ENCODE measurements at regions of chr17 and their contacts with region 1.

Region 1: DNA sequence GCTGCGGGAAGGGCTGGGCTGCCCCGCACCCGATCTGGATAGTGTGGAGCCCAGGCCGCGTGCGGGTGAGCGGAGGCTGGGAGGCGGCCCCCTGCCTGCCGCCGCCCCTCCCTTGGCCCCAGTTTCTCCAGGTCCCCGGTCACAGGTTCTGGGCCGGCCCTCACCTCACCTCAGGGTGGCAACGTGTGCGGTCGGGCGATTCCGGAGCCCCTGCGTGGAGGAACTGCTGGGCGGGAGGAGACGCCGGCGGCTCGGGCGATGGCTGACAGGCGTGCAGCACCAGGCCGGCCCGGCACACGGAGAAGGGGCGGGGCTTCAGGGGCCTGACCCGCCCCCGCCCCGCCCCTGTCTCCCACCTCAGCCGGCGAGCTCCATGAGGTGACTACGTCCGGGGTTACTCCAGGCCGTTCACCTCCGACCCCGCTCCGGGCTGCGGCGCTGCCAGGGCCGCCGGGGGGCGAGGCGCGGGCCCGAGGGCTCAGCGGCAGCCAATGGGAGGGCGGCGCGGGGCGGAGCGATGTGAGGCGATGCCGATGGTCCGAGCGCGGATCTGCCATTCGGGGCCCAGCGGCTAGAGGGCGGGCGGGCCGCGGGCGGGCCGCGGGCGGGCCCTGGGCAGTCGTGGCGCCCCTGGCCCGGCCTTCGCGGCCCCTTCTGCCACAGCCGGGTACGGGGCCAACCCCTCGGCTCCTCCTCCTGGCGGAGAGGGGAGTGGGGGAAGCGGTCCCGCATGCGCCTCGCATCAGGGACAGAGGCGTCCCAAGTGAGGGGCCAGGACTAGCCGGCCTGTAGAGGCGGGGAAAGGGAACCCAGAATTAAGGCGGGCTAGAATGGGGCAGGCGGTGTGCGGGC is 16.7 kb upstream of the C17orf78 start:
- DNase-seq: peak; percentile 96
- H3K4me3 ChIP-seq: peak overlapping the region; percentile 78
- H3K27ac ChIP-seq: peak overlapping the region; percentile 42
- H3K4me1 ChIP-seq: peaks cover 28% of the 10 kb centered on the region
- CTCF ChIP-seq: peak; percentile 42; the same call in 1 of the 2 replicates

Region 2: GRCh38 chr17:36550491-36551417 is 808.3 kb before region 1 on chr17:
- CTCF ChIA-PET with region 1: no interaction called
- POLR2A ChIA-PET with region 1: no interaction called
- intact Hi-C with region 1: loop called (anchors 5 kb)
- DNase-seq: peak; percentile 57
- H3K4me3 ChIP-seq: peak overlapping the region; percentile 56
- H3K27ac ChIP-seq: peak overlapping the region; percentile 67
- H3K4me1 ChIP-seq: peaks cover 85% of the 10 kb centered on the region
- CTCF ChIP-seq: no peak

Region 3: DNA sequence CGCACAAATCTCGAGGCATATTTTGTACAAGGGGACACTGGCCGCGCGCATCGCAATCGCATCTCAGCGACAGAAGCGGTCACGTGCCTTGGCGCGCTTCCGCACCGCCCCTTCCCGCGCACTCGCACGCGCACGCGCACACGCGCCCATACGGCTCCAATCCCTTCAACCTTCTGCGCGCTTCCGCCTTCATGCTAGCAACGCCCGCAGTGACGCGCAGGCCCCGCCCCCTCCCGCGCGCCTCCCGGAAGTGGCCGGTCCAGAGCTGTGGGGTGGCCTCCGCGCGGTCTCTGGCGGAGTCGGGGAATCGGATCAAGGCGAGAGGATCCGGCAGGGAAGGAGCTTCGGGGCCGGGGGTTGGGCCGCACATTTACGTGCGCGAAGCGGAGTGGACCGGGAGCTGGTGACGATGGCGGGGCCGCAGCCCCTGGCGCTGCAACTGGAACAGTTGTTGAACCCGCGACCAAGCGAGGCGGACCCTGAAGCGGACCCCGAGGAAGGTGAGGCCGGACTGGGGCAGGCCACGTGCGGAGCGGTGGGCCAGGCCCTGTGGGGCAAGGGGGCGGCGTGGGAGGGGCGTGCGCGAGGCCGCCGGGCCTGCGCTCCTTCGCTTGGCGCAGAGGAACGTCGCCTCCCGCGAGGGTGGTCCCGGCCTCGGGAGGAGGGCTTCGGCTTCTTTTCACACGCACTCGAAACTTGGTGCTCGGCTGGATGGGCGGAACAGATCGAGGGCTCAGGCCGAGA is 410.2 kb before region 1 on chr17 and contains the start of gene AATF:
- CTCF ChIA-PET with region 1: no interaction called
- POLR2A ChIA-PET with region 1: no interaction called
- intact Hi-C with region 1: loop called (anchors 5 kb)
- DNase-seq: peak; percentile 97
- H3K4me3 ChIP-seq: peak within 1 kb of the TSS; percentile 91
- H3K27ac ChIP-seq: peak within 1 kb of the TSS; percentile 59
- H3K4me1 ChIP-seq: peaks cover 24% of the 10 kb centered on the region
- CTCF ChIP-seq: no peak
- total RNA-seq, gene AATF: 71.7 and 83.5 TPM in 2 replicates

Region 4: DNA sequence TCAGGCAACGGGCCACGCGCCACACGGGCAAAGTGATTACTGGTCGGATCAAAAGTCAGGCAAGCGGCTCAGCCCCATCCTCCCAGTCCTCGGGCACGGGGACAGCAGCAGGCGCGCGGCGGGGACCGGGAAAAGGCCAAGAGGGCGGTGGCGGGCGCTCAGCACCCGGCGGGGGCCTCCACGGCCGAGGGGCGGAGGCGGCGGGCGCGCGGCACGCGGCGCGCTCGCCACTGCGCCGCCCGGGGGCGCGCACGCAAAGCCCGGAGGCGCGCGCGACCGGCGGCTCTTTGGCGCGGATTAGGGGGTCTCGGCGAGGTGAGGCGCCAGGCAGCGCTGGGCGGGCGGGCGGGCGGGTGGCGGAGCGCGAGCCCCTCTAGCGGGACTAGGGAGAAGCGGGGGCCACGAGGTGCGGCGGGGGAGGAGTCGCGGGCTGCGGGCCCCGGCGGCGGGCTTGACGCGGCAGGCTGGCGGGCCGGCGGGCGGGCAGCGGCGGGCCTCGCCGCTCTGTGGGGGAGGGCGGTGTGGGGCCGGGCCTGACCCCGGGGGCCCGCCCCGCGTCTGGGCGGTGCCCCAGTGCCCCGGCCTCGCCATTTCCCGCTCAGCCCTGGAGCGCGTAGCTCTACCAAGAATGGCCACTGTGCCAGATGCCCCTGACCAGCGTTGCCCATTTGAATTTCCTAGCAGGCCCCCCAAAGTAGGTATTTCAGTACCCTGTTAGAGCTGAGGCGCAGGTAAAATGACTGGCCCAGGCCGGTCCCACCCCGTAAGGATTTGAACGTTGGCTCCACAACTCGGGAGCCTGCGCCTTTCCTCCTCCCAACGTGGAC is 47.8 kb after region 1 on chr17 and contains the starts of genes ACACA and TADA2A:
- CTCF ChIA-PET with region 1: no interaction called
- POLR2A ChIA-PET with region 1: interaction called, 3 read pairs
- intact Hi-C with region 1: loop called (anchors 2 kb)
- DNase-seq: peak; percentile 86
- H3K4me3 ChIP-seq: peak within 1 kb of the TSS; percentile 99
- H3K27ac ChIP-seq: peak within 1 kb of the TSS; percentile 70
- H3K4me1 ChIP-seq: peaks cover 24% of the 10 kb centered on the region
- CTCF ChIP-seq: 0 out of 2 replicates have a peak, but pooled peaks have one; percentile 10
- total RNA-seq, gene ACACA: 32.1 and 45.4 TPM in 2 replicates
- total RNA-seq, gene TADA2A: 35.8 and 53.5 TPM in 2 replicates

Region 5: DNA sequence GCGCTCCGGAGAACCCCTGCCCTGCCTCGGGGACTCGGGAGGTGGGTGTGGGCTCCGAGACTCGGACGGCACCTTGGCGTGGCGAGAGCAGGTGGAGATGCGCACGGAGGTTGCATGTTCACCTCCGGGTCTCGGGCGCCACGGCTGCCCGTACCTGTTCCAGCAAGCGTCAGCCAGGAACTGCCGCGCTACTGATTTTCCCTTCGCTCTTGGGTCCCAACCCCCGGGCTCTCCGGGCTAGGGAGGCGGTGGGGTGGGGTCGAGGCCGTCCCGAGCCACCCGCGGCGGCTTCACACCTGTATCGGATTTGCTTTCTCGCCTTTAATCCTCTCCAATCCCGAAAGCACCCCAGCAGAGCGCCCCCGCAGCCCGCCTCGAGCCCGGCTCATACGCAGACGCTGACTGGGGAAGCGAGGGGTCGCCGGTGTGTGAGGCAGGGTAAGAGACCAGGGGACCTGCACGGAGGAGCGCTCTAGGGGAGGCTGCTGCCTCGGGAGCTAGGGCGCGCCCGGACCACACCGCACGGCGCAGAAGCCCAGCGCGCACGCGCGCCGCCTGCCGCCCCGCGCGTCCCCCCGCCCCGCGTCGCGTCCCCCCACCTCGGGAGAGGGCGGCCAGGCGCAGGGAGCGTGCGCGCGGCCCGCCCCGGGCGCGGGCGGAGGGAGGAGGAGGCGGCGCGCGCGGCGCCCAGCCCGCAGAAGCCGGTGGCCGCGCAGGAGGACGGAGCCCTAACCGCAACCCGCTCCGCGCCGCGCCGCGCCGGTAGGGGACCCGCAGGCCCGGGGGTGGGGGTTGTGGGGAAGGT is 130.3 kb after region 1 on chr17 and contains the start of gene DUSP14:
- CTCF ChIA-PET with region 1: no interaction called
- POLR2A ChIA-PET with region 1: no interaction called
- intact Hi-C with region 1: loop called (anchors 5 kb)
- DNase-seq: peak; percentile 91
- H3K4me3 ChIP-seq: peak within 1 kb of the TSS; percentile 88
- H3K27ac ChIP-seq: peak within 1 kb of the TSS; percentile 51
- H3K4me1 ChIP-seq: peaks cover 41% of the 10 kb centered on the region
- CTCF ChIP-seq: peak; percentile 59
- total RNA-seq, gene DUSP14: 21.2 and 21.5 TPM in 2 replicates

Region 6: DNA sequence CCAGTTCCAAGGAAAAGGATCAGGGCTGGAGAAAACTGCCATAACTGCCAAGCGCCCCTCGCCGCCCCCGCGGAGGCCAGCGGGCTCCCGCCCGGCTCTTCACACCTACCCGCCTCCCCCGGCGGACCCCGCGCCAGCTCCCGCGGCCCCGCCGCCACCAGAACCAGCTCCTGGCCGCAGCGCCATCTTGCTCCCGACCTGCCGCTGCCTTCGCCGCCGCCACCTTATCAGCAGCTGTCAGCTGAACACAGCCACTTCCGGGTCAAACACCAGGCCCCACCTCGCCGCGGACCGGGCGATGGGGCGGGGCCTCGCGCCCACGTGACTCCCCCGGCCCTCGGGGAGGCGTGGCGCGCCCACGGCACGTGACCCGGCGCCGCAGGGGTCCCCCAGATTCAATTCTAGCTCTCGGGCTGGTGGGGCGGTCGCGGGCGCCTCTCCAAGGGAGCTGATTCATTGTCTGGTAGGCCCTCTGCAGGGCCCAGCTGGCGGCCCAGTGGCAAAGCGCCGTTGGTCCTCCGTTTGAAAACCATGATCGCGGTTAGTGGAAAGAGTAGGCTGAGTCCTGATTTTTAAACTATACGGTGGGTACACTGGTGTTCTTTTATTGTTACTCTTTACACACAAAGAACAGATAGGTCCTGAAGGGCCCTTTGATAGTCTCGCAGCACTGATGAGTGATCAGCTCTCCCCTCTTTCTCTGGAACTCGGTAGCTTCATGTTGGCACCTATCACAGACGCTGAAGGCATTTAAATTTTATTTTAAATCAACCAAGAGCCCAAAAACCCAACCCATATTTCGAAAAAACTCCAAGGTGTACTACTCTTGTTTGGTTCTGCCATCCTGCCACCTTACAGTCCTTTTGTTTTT is 250.3 kb after region 1 on chr17 and contains the start of gene SYNRG:
- CTCF ChIA-PET with region 1: no interaction called
- POLR2A ChIA-PET with region 1: no interaction called
- intact Hi-C with region 1: loop called (anchors 5 kb)
- DNase-seq: peak; percentile 97
- H3K4me3 ChIP-seq: peak within 1 kb of the TSS; percentile 99
- H3K27ac ChIP-seq: peak within 1 kb of the TSS; percentile 97
- H3K4me1 ChIP-seq: peaks cover 40% of the 10 kb centered on the region
- CTCF ChIP-seq: peak; percentile 73
- total RNA-seq, gene SYNRG: 39.6 and 46.5 TPM in 2 replicates

Measured in OCI-LY7 (cell line).